ENCODE measurements at regions of chr12 and their contacts with region 1.

Region 1: GRCh38 chr12:108731105-108731865 is at the start of gene CORO1C:
- DNase-seq: peak; percentile 98 to 99
- ATAC-seq: peak; percentile 94
- H3K4me3 ChIP-seq: peak within 1 kb of the TSS; percentile 53 to 88
- H3K27ac ChIP-seq: peak within 1 kb of the TSS; percentile 88 to 93
- H3K4me1 ChIP-seq: peaks cover 0 to 4% of the 10 kb centered on the region in 2 donors
- H3K27me3 ChIP-seq: no peaks in the 10 kb centered on the region
- total RNA-seq, gene CORO1C: 207 to 387 TPM

Region 2: GRCh38 chr12:108664338-108665258 is 66.7 kb before region 1 on chr12:
- intact Hi-C with region 1: loop called (anchors 2 kb)
- DNase-seq: peak; percentile 83 to 88
- ATAC-seq: peak; percentile 98
- H3K4me3 ChIP-seq: no peak overlapping the region
- H3K27ac ChIP-seq: peak overlapping the region; percentile 82 to 97
- H3K4me1 ChIP-seq: peaks cover 0 to 8% of the 10 kb centered on the region in 2 donors
- H3K27me3 ChIP-seq: no peaks in the 10 kb centered on the region

Region 3: DNA sequence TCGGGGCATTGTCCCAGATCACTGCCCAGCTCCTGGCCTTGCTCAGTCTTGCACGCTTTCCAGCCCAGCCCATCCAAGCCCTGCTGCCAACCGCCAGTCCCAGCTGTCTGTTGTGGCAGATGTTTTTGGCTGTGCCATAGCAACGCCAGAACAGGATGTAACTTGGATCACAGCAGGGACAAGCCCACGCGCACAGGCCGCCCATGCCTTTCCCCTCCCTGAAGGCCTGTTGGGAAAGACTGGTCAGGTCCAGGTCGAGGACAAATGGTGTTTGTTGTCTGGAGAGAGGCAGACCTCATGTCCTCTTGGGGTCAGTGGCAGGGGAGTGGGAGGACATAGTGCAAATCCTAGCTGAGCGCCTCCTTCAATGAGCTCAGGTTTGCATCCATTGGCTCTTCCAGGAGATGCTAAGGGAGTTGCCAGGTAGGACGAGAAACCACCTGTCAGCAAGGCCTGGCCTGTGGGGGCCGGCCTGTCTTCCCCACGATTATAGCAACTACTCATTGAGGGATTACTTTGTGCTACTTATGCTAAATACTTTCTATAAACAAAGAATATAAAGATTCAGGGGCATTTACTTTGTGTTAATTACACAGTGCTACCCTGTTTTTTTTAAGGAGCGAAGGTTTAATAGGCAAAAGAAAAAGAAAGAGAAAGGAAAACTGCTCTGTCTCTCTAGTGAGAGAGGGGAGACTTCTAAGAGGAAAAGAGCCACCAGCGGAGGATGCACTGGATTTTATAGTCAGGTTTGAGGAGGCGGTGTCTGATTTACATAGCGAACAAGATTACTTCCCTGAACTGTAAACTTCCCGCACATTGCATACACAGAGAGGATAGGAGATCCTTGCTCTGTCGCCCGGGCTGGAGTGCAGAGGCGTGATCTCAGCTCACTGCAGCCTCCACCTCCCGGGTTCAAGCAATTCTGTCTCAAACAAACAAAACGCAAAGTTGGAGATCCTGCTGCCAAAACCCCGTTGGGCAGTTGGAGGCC is 42.8 kb after region 1 on chr12:
- intact Hi-C with region 1: loop called in 1 of 2 experiments (anchors 5 kb)
- DNase-seq: peak; percentile 91 to 92
- ATAC-seq: peak; percentile 90
- H3K4me3 ChIP-seq: no peak overlapping the region
- H3K27ac ChIP-seq: peak overlapping the region in 1 of 2 donors; percentile 49
- H3K4me1 ChIP-seq: no peaks in the 10 kb centered on the region
- H3K27me3 ChIP-seq: no peaks in the 10 kb centered on the region

Region 4: GRCh38 chr12:108850854-108851573 is 119.7 kb after region 1 on chr12:
- intact Hi-C with region 1: loop called (anchors 2 to 5 kb)
- DNase-seq: peak; percentile 83 to 86
- ATAC-seq: no peak
- H3K4me3 ChIP-seq: no peak overlapping the region
- H3K27ac ChIP-seq: peak overlapping the region in 1 of 2 donors; percentile 19
- H3K4me1 ChIP-seq: peaks cover 0 to 3% of the 10 kb centered on the region in 2 donors
- H3K27me3 ChIP-seq: no peaks in the 10 kb centered on the region

Region 5: DNA sequence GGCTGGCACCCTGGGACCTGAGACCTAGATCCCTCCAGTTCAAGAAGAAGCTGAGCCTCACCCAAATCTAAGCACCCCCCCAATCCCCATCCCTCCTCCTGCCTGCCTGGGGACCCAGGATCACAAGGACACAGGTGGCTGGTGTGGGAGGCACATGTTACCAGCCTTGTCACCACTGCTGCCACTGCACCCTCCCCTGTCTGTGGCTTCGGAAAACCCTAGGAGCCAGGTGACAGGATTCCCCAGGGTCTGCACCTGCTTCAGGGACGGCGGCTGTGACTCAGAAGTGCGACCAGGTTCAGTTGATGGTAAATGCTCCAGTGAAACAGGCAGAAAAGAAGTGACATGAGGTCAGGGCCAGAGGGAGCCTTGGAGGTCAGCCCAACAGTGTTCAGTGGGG is 919.5 kb after region 1 on chr12:
- intact Hi-C with region 1: no loop called
- DNase-seq: no peak
- ATAC-seq: no peak
- H3K4me3 ChIP-seq: no peak overlapping the region
- H3K27ac ChIP-seq: no peak overlapping the region
- H3K4me1 ChIP-seq: no peaks in the 10 kb centered on the region
- H3K27me3 ChIP-seq: no peaks in the 10 kb centered on the region